H1 (cell line): ENCODE measurements at regions of chr12 and their contacts with region 1.

Region 1: DNA sequence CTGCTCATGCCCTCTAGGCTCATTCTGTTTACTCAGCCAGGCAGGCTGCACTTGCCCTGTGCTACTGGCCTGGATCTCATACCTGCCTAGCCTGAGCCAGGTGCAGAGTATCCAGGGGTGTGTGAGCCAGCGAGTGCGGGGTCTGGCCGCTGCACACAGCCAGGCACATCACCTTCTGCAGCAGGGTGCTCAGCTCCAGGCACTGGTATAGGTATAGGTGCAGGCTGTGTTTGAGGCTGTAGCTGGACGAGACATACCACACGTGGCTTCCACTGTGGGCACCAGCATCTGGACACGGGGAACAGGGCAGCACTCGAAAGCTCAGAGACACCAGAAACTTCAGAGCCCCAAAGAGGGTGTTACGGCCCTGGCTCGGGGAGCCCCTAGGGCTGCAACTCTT is 424.2 kb downstream of the RERGL start:
- DNase-seq: no peak
- H3K4me3 ChIP-seq: no peak overlapping the region
- H3K27ac ChIP-seq: no peak overlapping the region
- H3K4me1 ChIP-seq: no peaks in the 10 kb centered on the region
- H3K27me3 ChIP-seq: no peaks in the 10 kb centered on the region
- CTCF ChIP-seq: no peak
- EP300 ChIP-seq: no peak
- POLR2A ChIP-seq: no peak
- RAD21 ChIP-seq: no peak

Region 2: DNA sequence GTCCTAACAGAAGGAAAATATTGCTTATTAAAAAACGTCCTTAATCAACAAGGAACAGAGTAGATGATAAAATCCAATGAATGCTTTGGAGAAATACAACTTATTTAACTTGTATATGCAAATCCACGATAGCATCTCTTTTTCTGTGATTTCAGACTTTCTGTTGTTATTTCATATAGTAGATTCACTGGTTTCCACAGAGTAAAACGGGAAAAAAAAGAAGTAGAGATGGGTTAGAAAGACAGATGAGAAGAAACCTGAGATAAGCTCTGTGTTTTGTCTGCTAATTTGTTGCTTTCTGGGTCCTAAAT is 23.5 kb before region 1 on chr12:
- CTCF ChIA-PET with region 1: interaction called, 16 read pairs
- POLR2A ChIA-PET with region 1: no interaction called
- DNase-seq: no peak
- H3K4me3 ChIP-seq: no peak overlapping the region
- H3K27ac ChIP-seq: no peak overlapping the region
- H3K4me1 ChIP-seq: no peaks in the 10 kb centered on the region
- H3K27me3 ChIP-seq: no peaks in the 10 kb centered on the region
- CTCF ChIP-seq: no peak
- EP300 ChIP-seq: no peak
- POLR2A ChIP-seq: no peak
- RAD21 ChIP-seq: no peak